Dorsolateral prefrontal cortex (tissue), 120 donors: ENCODE measurements at regions of chrX and their contacts with region 1.

Region 1: DNA sequence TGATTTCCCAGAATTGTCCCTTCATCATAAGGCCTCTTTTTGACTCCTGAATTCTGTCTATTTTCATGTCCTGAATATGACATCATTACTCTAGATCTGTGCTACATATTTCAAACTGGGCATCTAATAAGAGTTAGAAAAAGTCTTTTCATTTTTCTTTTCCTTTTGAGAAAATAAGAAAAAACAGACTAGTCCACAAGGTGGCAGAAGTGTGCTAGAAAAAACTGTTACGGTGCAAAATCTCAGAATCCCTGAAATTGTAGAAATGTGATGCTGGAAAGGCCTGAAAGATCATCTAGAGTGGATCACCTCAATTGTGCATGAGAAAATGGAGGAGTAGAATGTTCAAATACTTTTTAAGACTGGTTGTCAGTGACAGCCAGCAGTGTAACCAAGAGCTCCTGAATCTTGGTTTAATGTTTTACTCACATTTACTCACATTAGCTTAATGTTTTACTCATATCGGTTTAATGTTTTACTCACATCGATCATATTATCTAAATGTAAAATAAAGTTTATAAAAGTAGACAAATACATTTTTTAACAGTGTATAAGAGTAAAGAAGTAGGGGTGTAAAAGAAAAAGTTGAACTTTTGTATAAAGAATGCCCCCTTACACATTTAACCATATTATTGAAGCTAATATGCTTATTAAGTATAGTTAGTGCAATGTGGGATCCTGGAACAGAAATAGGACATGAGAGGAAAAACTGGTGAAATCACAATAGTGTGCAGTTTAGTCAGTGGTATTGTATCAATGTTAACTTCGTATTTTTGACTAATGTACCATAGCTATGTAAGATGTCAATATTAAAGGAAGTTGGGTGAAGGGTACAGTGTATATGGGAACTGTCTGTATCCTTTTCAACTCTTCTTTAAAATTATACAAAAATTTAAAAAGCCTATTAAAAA is 15.2 kb downstream of the ASB11 start:
- DNase-seq: no peak
- H3K4me3 ChIP-seq: no peak overlapping the region
- H3K27ac ChIP-seq: peak overlapping the region in 13 of 59 donors; percentile 0 to 61 (median 24)
- H3K27me3 ChIP-seq: peaks cover 0 to 52% (median 10%) of the 10 kb centered on the region in 45 donors
- CTCF ChIP-seq: peak; percentile 43 to 81 (median 66)

Region 2: GRCh38 chrX:15468036-15468435 is 167.8 kb after region 1 on chrX:
- intact Hi-C with region 1: loop called (anchors 2 kb)
- DNase-seq: no peak
- H3K4me3 ChIP-seq: no peak overlapping the region
- H3K27ac ChIP-seq: no peak overlapping the region
- H3K27me3 ChIP-seq: peaks cover 0 to 46% (median 6%) of the 10 kb centered on the region in 45 donors
- CTCF ChIP-seq: peak in 53 of 56 donors; percentile 24 to 72 (median 50)

Region 3: GRCh38 chrX:15564981-15565579 is 264.9 kb after region 1 on chrX:
- intact Hi-C with region 1: loop called in 1 of 2 experiments (anchors 10 kb)
- DNase-seq: peak; percentile 5 to 62 (median 49)
- H3K4me3 ChIP-seq: no peak overlapping the region
- H3K27ac ChIP-seq: no peak overlapping the region
- H3K27me3 ChIP-seq: peaks cover 0 to 83% (median 25%) of the 10 kb centered on the region in 45 donors
- CTCF ChIP-seq: peak in 54 of 56 donors; percentile 34 to 74 (median 55)